Ovary (tissue), 10 donors: ENCODE measurements at regions of chr11 and their contacts with region 1.

Region 1: GRCh38 chr11:65095974-65096806 is at the start of gene VPS51:
- DNase-seq: peak; percentile 84 to 90 (median 88)
- H3K4me3 ChIP-seq: peak within 1 kb of the TSS; percentile 91
- H3K27ac ChIP-seq: peak within 1 kb of the TSS; percentile 60 to 86
- H3K4me1 ChIP-seq: peaks cover 8% of the 10 kb centered on the region
- H3K27me3 ChIP-seq: no peaks in the 10 kb centered on the region
- CTCF ChIP-seq: peak in 1 of 3 donors; percentile 50
- EP300 ChIP-seq: no peak
- POLR2A ChIP-seq: peak; percentile 78
- total RNA-seq, gene VPS51: 149 to 543 (median 231) TPM

Region 2: DNA sequence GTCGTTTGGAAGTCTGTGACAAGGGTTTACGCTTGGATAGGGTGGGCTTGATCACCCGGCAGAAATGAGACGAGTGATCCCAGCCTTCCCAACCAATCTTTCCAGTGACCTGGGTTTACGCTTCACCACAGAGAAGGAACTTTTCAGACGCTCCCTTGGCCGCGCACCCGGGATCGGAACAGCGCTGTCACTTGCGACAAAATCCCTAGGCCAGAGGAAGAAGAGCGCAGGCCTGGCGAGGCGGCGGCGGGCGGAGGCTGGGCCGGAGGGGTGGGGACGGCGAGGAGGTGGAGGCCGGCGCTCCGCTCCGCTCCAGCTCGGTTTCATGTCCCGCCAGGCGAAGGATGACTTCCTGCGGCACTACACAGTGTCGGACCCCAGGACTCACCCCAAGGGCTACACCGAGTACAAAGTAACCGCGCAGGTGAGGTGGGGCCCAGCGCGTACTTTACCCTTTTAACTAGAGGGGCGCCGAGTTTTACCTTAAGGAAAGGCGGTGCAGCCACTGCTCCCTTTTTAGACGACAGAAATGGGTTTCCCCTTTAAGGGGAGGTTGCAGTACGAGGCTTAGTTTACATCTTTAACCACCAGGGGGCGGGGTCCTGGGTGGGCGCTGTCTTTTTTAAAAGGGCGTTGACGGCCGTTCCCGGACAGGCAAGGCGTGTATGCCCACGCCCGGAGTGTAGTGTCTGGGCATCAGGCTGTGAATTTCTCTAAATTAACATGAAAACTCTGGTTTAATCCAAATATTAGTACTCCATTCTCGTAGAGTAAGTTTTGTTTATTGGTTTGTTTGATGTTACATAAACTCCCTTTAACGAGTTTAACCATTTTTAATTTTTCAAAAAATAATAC is 68.8 kb before region 1 on chr11 and contains the start of gene SNX15:
- intact Hi-C with region 1: loop called in 1 of 4 experiments (anchors 5 kb)
- DNase-seq: peak; percentile 89 to 94 (median 91)
- H3K4me3 ChIP-seq: peak within 1 kb of the TSS; percentile 77
- H3K27ac ChIP-seq: peak within 1 kb of the TSS; percentile 56 to 77
- H3K4me1 ChIP-seq: peaks cover 2% of the 10 kb centered on the region
- H3K27me3 ChIP-seq: no peaks in the 10 kb centered on the region
- CTCF ChIP-seq: peak; percentile 74 to 84 (median 74)
- EP300 ChIP-seq: no peak
- POLR2A ChIP-seq: peak; percentile 68
- total RNA-seq, gene SNX15: 10.2 to 30.5 (median 19.9) TPM

Region 3: DNA sequence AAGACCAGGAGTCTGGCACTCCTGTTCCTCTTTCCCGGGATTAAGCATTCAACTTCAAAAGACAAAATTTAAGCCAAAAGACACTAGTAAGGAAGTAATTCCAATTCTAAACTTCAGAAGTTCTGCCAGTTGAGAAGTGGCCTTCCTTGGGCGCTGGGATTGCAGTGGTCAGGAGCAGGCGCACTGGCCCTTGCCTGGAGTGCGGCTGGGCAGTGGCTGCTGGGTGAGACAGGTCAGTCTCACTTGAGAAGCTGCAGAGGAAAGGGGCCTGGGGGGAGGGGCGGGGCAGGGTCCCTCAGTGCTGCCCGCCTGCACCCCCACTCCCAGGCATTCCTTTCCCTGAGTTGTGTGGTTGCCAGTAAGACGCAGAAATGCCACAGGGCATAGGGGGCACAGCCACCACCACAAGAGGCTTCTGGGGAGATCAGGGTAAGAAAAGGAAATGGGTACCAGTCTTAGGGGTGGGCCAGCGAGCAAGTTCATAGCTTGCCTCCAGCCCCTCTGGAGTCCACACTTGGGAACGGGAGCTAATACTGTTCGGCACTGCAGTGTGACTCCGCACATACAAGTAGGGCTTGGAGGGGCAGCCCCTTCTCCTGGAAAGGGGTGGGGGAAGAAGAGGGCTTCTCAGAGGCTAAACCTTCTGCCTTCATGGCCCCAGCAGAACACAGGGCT is 31.4 kb after region 1 on chr11:
- intact Hi-C with region 1: loop called in 1 of 4 experiments (anchors 2 kb)
- DNase-seq: no peak
- H3K4me3 ChIP-seq: no peak overlapping the region
- H3K27ac ChIP-seq: no peak overlapping the region
- H3K4me1 ChIP-seq: no peaks in the 10 kb centered on the region
- H3K27me3 ChIP-seq: no peaks in the 10 kb centered on the region
- CTCF ChIP-seq: no peak
- EP300 ChIP-seq: no peak
- POLR2A ChIP-seq: no peak

Region 4: GRCh38 chr11:65150509-65151271 is 54.5 kb after region 1 on chr11:
- intact Hi-C with region 1: no loop called
- DNase-seq: peak; percentile 50 to 77 (median 65)
- H3K4me3 ChIP-seq: no peak overlapping the region
- H3K27ac ChIP-seq: peak overlapping the region in 1 of 2 donors; percentile 60
- H3K4me1 ChIP-seq: no peaks in the 10 kb centered on the region
- H3K27me3 ChIP-seq: no peaks in the 10 kb centered on the region
- CTCF ChIP-seq: no peak
- EP300 ChIP-seq: no peak
- POLR2A ChIP-seq: no peak